Activated CD8-positive, alpha-beta memory T cell treated with anti-CD3 and anti-CD28 coated beads, Interleukin-2, amount 10 ng/mL, durations not matched to agents 7 days and 5 days (primary cell): ENCODE measurements at regions of chr2 and their contacts with region 1.

Region 1: DNA sequence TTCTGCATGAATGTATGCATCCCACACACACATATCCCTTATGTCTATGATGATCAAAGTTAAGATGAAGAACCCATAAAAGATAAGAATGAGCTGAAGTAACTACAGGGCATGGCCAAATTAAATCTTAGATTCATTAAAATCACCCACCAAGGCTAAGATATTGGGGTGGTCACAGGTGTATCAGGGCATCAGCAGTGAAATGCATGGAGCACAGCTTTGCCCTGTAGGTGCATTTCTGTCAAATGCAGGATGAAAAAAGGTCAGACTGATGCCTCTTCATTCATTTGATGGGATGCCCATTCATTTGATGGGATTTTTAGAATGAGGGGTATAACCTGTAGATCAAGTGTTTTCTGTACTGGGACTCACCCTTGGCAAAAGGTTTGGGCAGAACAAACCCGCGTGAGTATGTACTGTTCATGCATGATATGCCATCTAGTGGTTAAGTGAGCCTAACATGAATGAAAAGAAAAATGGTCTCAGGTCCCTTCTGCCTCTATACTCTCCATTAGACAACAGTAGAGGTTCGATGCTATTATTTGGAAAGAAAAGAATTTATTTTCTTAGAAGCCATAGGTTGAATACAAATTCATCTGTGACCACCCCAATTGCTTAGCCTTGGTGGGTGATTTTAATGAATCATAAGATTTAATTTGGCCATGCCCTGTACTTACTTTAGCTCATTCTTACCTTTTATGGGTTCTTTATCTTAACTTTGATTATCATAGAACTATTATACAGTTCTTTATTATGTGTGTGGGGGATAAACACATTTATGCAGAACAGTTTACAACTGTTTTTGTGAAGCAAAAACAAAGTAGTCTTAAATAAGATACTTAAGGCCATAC is 43.2 kb upstream of the NOSTRIN start:
- DNase-seq: no peak
- ATAC-seq: peak; percentile 67
- H3K4me3 Mint-ChIP-seq: no peak overlapping the region
- H3K27ac Mint-ChIP-seq: no peak overlapping the region
- H3K4me1 Mint-ChIP-seq: peaks cover 9% of the 10 kb centered on the region
- H3K27me3 Mint-ChIP-seq: no peaks in the 10 kb centered on the region

Region 2: GRCh38 chr2:168346725-168347477 is 412.3 kb before region 1 on chr2:
- CTCF ChIA-PET with region 1: interaction called, 15 read pairs
- DNase-seq: peak; percentile 73
- ATAC-seq: peak; percentile 88
- H3K4me3 Mint-ChIP-seq: peak overlapping the region; percentile 72
- H3K27ac Mint-ChIP-seq: no peak overlapping the region
- H3K4me1 Mint-ChIP-seq: peaks cover 5% of the 10 kb centered on the region
- H3K27me3 Mint-ChIP-seq: peaks cover 22% of the 10 kb centered on the region

Region 3: DNA sequence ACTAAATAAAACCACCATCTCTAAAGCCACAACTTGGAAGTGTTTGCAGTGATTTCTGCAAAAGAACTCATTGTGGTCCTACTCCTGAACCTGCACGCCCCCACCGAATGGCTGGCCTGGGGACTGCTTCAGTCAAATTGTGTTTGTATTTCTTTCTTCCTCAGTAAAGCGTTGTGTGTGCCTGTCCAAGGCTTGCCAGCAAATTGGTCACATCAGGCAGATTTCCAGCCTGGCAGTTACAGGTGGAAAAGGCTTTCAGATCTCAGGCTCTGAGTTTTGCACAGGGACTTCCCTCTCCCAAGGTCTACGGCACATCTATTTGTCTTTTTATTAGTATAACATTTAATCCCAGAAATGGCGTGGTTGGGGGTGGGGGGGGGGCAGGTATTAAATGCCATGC is 10.7 kb before region 1 on chr2:
- CTCF ChIA-PET with region 1: no interaction called
- DNase-seq: no peak
- ATAC-seq: no peak
- H3K4me3 Mint-ChIP-seq: no peak overlapping the region
- H3K27ac Mint-ChIP-seq: no peak overlapping the region
- H3K4me1 Mint-ChIP-seq: peaks cover 13% of the 10 kb centered on the region
- H3K27me3 Mint-ChIP-seq: no peaks in the 10 kb centered on the region